ENCODE measurements at regions of chr12 and their contacts with region 1.

Region 1: DNA sequence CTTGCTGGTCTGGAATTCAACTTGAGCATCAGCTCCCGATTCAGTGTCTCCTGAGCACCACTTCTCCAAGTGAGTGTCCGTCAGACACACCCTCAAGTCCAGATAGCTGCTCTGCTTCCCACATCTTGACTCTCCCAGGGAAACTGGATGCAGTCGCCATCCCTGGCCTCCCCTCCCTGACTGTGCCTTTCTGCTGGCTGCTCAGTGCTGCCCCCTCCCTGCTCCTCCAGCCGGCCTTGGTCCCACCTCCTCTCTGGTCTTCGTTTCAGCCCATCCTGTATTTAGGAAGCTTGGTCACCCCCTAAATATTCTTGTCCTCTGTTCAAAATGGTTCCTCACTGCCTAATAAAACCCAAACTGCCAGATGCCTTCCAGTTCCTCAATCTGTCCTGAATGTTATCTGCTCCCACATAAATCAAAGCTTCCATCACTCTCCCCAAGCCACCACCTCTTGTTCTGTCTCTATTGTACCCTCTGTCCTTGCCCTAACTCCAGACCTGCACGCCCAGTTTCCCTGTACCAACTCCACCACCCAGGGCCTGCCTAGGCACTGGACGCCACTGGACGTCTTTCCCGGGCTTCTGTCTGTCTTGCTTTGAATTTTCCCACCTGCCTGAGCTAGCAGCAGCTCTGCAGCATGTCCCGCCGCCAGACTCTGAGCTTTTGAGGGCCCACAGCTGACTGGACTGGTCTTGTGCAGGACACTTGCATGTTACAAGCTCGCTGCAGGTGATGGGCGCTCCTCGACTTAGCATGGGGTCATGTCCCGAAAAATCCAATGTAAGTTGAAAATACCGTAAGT is 33.8 kb downstream of the CCDC92 start:
- DNase-seq: peak in 1 of 2 experiments; percentile 74
- H3K4me3 ChIP-seq: no peak overlapping the region
- H3K27ac ChIP-seq: no peak overlapping the region
- H3K4me1 ChIP-seq: no peaks in the 10 kb centered on the region
- H3K27me3 ChIP-seq: peaks cover 0 to 2% (median 0%) of the 10 kb centered on the region in 4 experiments; a peak in 1 of 7 replicates
- CTCF ChIP-seq: peak; percentile 62 to 97 (median 86)
- EP300 ChIP-seq: no peak
- POLR2A ChIP-seq: no peak
- RAD21 ChIP-seq: peak; percentile 53 to 56

Region 2: GRCh38 chr12:123905319-123905925 is 33.5 kb before region 1 on chr12:
- CTCF ChIA-PET with region 1: interaction called, 26 read pairs
- POLR2A ChIA-PET with region 1: no interaction called
- DNase-seq: peak in 1 of 2 experiments; percentile 68
- H3K4me3 ChIP-seq: no peak overlapping the region
- H3K27ac ChIP-seq: no peak overlapping the region
- H3K4me1 ChIP-seq: peaks cover 0 to 7% (median 4%) of the 10 kb centered on the region in 4 experiments; a peak in 3 of 7 replicates
- H3K27me3 ChIP-seq: no peaks in the 10 kb centered on the region
- CTCF ChIP-seq: peak; percentile 1 to 76 (median 59)
- EP300 ChIP-seq: no peak
- POLR2A ChIP-seq: no peak
- RAD21 ChIP-seq: peak; percentile 40 to 46; a peak in 3 of 4 replicates

Region 3: DNA sequence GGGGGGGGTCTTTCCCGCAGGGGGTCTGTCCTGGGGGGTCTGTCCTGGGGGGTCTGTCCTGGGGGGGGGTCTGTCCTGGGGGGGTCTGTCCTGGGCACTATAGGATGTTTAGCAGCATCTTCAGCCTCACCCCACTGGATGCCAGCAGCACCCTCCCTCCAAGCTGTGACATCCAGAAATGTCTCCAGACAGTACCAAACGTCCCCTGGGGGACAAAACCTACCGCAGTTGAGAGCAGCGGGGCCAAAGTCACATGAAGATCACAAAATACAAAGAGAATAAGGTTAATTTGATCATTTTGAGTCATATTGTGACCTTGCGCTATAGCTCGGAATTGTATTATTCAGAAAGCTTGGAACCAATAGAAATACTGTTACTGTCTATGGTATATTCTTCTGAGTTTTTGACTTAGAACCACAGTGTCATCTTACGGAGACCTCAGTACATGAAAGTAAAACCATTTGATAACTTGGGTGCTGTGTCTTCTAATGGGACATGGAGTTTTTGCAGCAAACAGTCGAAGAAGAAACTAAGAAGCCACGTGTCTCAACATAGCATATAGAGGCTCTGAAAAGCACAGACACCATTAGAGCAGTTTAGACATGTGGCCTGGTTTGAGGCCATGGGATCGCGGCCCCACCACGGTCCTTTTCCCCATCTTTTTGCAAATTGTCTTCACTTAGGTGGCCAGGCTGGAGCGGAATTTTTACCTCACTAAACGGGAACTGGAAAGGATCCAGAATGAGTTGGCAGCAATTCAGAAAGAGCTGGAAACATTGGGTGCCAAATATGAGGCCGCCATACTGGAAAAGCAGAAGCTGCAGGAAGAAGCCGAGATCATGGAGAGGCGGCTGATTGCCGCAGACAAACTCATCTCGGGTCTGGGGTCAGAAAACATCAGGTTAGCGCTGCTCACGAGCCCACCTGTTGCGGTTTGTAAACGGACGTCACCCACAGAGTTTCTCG is 26.2 kb before region 1 on chr12:
- CTCF ChIA-PET with region 1: interaction called, 23 read pairs
- POLR2A ChIA-PET with region 1: no interaction called
- DNase-seq: no peak
- H3K4me3 ChIP-seq: no peak overlapping the region
- H3K27ac ChIP-seq: no peak overlapping the region
- H3K4me1 ChIP-seq: peaks cover 0 to 8% (median 0%) of the 10 kb centered on the region in 4 experiments; a peak in 2 of 7 replicates
- H3K27me3 ChIP-seq: 0 out of 7 replicates have a peak, but pooled peaks cover 0 to 3% (median 0%) of the 10 kb centered on the region in 4 experiments
- CTCF ChIP-seq: no peak
- EP300 ChIP-seq: no peak
- POLR2A ChIP-seq: no peak
- RAD21 ChIP-seq: no peak

Region 4: DNA sequence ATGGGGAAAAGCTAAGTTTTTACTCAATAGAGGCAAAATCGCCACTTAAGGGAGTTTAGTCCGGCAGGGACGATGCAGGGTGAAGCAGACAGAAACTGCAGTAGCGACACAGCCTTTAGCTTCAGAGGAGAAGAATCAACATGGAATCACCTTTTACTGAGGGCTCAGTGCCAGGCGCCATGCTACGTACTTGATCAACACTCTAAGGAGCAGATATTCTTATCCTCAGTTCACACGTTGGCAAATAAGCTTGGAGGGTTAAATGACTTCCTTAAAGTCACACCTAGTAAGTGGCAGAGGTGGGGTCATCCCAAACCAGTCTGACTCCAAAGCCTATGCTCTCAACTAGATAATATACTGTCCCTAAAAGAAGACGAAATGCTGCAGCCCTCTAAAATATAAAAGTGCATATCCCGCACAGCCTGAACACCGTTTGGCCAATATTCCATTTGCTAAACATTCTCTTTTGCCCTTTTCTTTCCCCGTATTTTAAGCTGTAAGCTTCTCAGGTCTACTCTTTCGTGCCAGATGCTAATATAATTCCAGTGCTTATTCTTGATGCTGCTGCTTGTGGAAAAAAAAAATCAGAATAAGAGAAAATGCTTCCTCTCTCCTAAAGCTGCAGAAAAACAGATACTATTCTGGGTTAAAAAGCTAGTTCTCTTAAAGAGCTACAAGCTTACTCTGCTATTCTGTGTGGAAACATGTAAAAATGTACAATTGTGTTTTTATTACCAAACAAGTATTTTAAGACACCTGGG is 22.9 kb after region 1 on chr12:
- CTCF ChIA-PET with region 1: interaction called, 14 read pairs
- POLR2A ChIA-PET with region 1: no interaction called
- DNase-seq: no peak
- H3K4me3 ChIP-seq: no peak overlapping the region
- H3K27ac ChIP-seq: no peak overlapping the region
- H3K4me1 ChIP-seq: no peaks in the 10 kb centered on the region
- H3K27me3 ChIP-seq: peaks cover 34 to 63% (median 57%) of the 10 kb centered on the region in 4 experiments
- CTCF ChIP-seq: no peak
- EP300 ChIP-seq: no peak
- POLR2A ChIP-seq: no peak
- RAD21 ChIP-seq: no peak

Region 5: GRCh38 chr12:123983822-123984485 is 45.1 kb after region 1 on chr12:
- CTCF ChIA-PET with region 1: interaction called, 11 read pairs
- POLR2A ChIA-PET with region 1: no interaction called
- DNase-seq: no peak
- H3K4me3 ChIP-seq: no peak overlapping the region
- H3K27ac ChIP-seq: no peak overlapping the region
- H3K4me1 ChIP-seq: no peaks in the 10 kb centered on the region
- H3K27me3 ChIP-seq: no peaks in the 10 kb centered on the region
- CTCF ChIP-seq: peak; percentile 9 to 87 (median 75)
- EP300 ChIP-seq: no peak
- POLR2A ChIP-seq: no peak
- RAD21 ChIP-seq: peak; percentile 89 to 93